PC-9 (cell line): ENCODE measurements at regions of chr15 and their contacts with region 1.

Region 1: GRCh38 chr15:66356345-66357236 is at the start of gene TIPIN:
- DNase-seq: peak; percentile 76 to 95
- H3K4me3 ChIP-seq: peak within 1 kb of the TSS; percentile 68
- H3K27ac ChIP-seq: 0 out of 2 replicates have a peak within 1 kb of the TSS, but pooled peaks have one; percentile 1
- H3K4me1 ChIP-seq: peaks cover 26% of the 10 kb centered on the region
- H3K27me3 ChIP-seq: no peaks in the 10 kb centered on the region
- CTCF ChIP-seq: no peak
- total RNA-seq, gene TIPIN: 12.9 and 13.1 TPM in 2 replicates

Region 2: GRCh38 chr15:66108483-66109265 is 247.9 kb before region 1 on chr15:
- CTCF ChIA-PET with region 1: interaction called, 22 read pairs
- POLR2A ChIA-PET with region 1: no interaction called
- intact Hi-C with region 1: no loop called
- DNase-seq: no peak
- H3K4me3 ChIP-seq: no peak overlapping the region
- H3K27ac ChIP-seq: no peak overlapping the region
- H3K4me1 ChIP-seq: no peaks in the 10 kb centered on the region
- H3K27me3 ChIP-seq: peaks cover 80% of the 10 kb centered on the region
- CTCF ChIP-seq: no peak

Region 3: GRCh38 chr15:66560851-66561525 is 204.4 kb after region 1 on chr15:
- CTCF ChIA-PET with region 1: no interaction called
- POLR2A ChIA-PET with region 1: no interaction called
- intact Hi-C with region 1: no loop called
- DNase-seq: no peak
- H3K4me3 ChIP-seq: no peak overlapping the region
- H3K27ac ChIP-seq: no peak overlapping the region
- H3K4me1 ChIP-seq: no peaks in the 10 kb centered on the region
- H3K27me3 ChIP-seq: no peaks in the 10 kb centered on the region
- CTCF ChIP-seq: no peak